ENCODE measurements at regions of chr19 and their contacts with region 1.

Region 1: GRCh38 chr19:18281082-18282020 is at the start of gene JUND:
- DNase-seq: peak; percentile 93
- ATAC-seq: peak; percentile 76
- H3K4me3 ChIP-seq: peak within 1 kb of the TSS; percentile 76 to 89
- H3K27ac ChIP-seq: peak within 1 kb of the TSS; percentile 100
- H3K4me1 ChIP-seq: peaks cover 43 to 56% of the 10 kb centered on the region in 2 experiments
- H3K27me3 ChIP-seq: no peaks in the 10 kb centered on the region
- CTCF ChIP-seq: no peak
- POLR2A ChIP-seq: peak; percentile 98
- RAD21 ChIP-seq: no peak
- total RNA-seq, gene JUND: 221 TPM

Region 2: DNA sequence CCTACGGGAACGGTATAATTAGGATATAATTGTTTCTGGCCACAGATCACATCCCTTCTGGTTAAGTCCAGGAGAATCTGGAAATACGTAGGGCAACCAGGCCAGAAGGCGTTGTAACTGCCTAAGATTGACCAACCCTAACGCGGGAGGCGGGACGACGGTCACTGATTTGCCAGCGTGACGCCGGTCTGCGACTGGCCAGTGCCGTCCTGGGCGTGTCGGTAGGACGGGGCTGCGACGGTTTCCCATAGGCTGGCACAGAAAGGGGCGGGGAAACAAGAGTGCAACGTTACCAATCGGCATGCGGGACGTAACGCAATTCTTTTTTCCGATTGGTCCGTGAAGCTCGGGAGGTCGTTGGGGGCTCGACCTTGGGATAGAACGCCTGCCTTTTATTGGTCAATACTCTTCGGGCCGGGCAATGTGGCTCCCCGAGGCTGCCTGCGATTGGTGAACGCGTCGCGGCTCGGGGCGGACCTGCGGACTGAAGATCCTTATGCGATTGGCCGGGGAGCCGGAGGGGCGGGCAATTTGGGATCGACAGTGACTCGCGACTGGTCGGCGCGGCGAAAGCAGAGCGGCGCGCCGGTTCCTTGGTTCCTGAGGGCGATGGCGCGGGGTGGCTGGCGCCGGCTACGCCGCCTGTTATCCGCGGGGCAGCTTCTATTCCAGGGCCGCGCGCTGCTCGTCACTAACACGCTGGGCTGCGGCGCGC is 88.5 kb before region 1 on chr19 and contains the start of gene MPV17L2:
- CTCF ChIA-PET with region 1: interaction called, 5 read pairs
- POLR2A ChIA-PET with region 1: interaction called, 27 read pairs
- RAD21 ChIA-PET with region 1: no interaction called
- intact Hi-C with region 1: no loop called
- DNase-seq: peak; percentile 100
- ATAC-seq: peak; percentile 88
- H3K4me3 ChIP-seq: peak within 1 kb of the TSS; percentile 90 to 93
- H3K27ac ChIP-seq: peak within 1 kb of the TSS; percentile 77
- H3K4me1 ChIP-seq: peaks cover 14 to 26% of the 10 kb centered on the region in 2 experiments
- H3K27me3 ChIP-seq: no peaks in the 10 kb centered on the region
- CTCF ChIP-seq: no peak
- POLR2A ChIP-seq: peak; percentile 92
- RAD21 ChIP-seq: no peak
- total RNA-seq, gene MPV17L2: 18.7 TPM

Region 3: DNA sequence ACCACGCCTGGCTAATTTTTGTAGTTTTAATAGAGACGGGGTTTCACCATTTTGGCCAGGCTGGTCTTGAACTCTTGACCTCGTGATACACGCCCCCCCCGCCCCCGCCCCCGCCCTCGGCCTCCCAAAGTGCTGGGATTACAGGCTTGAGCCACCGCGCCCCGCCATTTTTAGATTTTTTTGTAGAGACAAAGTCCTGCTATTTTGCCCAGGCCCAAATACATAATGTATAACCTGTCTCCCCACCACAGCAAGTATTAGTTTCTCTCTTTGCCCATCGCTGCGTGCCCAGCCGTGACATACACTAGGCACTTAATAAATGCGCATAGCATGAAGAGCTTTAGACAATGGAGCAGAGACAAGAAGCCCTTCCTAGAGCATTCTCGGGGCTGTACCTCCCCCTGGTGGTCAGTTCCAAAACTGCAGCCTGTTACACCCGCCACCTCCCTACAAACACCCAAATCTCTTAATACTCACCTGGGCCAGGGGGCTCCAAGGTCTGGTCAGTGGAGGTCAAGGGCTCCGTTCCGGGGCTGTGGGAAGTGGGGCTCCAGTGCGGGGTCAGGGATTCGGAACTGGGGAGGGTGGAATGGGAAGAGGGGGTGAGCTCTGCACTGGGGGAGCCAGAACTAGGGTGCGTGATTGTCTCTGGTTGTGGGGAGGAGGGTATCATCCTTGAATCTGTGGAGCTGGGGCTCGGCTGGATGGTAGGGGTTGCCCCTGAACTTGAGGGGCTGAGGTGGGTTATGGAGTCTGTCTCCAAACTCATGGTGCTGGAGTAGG is 29.6 kb before region 1 on chr19:
- CTCF ChIA-PET with region 1: interaction called, 10 read pairs
- POLR2A ChIA-PET with region 1: interaction called, 5 read pairs
- RAD21 ChIA-PET with region 1: no interaction called
- intact Hi-C with region 1: no loop called
- DNase-seq: peak; percentile 74
- ATAC-seq: peak; percentile 84
- H3K4me3 ChIP-seq: no peak overlapping the region
- H3K27ac ChIP-seq: no peak overlapping the region
- H3K4me1 ChIP-seq: peaks cover 0 to 28% of the 10 kb centered on the region in 2 experiments; a peak in 2 of 4 replicates
- H3K27me3 ChIP-seq: no peaks in the 10 kb centered on the region
- CTCF ChIP-seq: peak; percentile 91 to 99 (median 92)
- POLR2A ChIP-seq: no peak
- RAD21 ChIP-seq: peak; percentile 99

Region 4: DNA sequence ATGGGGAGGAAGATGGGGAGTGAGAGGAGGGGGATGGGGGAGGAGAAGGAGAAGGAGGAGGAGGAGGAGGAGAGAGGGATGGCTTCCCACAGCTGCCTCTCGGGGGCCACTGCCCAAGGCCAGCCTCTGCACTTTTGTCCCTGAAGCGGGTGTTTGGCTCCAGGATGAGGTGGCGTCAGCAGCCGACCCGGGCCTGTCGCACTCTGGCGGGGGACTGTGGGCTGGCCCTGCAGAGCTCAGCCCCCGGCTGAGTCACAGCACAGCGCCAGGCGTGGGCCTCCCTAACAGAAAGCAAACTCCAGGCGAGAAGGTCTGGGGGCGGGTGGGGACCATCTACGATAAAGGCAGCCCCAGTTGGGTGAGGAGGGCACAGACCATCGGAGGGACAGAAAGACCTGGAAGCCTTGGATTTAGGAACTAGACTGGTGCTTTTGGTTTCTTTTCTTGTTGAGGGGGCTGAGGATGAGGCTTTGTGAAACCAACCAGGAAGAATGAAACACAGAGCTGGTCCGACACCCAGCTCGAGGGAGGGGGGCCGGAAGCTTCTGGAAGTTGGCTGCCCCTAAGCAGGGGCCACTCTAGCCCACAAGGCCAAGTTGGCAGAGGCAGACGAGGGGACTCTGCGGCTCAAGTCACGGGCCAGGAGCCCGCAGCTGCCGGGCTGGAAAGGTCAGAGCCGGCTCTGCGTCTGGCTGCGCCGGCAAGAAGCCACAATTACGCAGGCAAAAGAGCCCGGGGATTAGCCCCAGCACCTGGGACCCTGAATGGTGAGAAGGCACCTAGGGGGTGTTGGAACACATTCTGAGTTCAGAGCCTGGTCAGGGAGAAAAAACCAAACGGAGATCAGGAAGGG is 23.3 kb after region 1 on chr19:
- CTCF ChIA-PET with region 1: interaction called, 21 read pairs
- POLR2A ChIA-PET with region 1: interaction called, 62 read pairs
- RAD21 ChIA-PET with region 1: interaction called, 4 to 5 read pairs
- intact Hi-C with region 1: no loop called
- DNase-seq: no peak
- ATAC-seq: peak; percentile 76
- H3K4me3 ChIP-seq: peak overlapping the region; percentile 46 to 55
- H3K27ac ChIP-seq: peak overlapping the region; percentile 97
- H3K4me1 ChIP-seq: peaks cover 49 to 63% of the 10 kb centered on the region in 2 experiments
- H3K27me3 ChIP-seq: no peaks in the 10 kb centered on the region
- CTCF ChIP-seq: no peak
- POLR2A ChIP-seq: peak; percentile 55
- RAD21 ChIP-seq: no peak

Region 5: GRCh38 chr19:18340190-18340989 is 59.0 kb after region 1 on chr19 and contains the start of gene PGPEP1:
- CTCF ChIA-PET with region 1: interaction called, 12 read pairs
- POLR2A ChIA-PET with region 1: interaction called, 19 read pairs
- RAD21 ChIA-PET with region 1: interaction called in 1 of 2 experiments, 5 read pairs
- intact Hi-C with region 1: loop called (anchors 5 kb)
- DNase-seq: no peak
- ATAC-seq: peak; percentile 76
- H3K4me3 ChIP-seq: peak within 1 kb of the TSS; percentile 76 to 82
- H3K27ac ChIP-seq: peak within 1 kb of the TSS; percentile 67
- H3K4me1 ChIP-seq: peaks cover 25 to 63% of the 10 kb centered on the region in 2 experiments
- H3K27me3 ChIP-seq: no peaks in the 10 kb centered on the region
- CTCF ChIP-seq: no peak
- POLR2A ChIP-seq: no peak
- RAD21 ChIP-seq: no peak
- total RNA-seq, gene PGPEP1: 30.9 TPM

Region 6: DNA sequence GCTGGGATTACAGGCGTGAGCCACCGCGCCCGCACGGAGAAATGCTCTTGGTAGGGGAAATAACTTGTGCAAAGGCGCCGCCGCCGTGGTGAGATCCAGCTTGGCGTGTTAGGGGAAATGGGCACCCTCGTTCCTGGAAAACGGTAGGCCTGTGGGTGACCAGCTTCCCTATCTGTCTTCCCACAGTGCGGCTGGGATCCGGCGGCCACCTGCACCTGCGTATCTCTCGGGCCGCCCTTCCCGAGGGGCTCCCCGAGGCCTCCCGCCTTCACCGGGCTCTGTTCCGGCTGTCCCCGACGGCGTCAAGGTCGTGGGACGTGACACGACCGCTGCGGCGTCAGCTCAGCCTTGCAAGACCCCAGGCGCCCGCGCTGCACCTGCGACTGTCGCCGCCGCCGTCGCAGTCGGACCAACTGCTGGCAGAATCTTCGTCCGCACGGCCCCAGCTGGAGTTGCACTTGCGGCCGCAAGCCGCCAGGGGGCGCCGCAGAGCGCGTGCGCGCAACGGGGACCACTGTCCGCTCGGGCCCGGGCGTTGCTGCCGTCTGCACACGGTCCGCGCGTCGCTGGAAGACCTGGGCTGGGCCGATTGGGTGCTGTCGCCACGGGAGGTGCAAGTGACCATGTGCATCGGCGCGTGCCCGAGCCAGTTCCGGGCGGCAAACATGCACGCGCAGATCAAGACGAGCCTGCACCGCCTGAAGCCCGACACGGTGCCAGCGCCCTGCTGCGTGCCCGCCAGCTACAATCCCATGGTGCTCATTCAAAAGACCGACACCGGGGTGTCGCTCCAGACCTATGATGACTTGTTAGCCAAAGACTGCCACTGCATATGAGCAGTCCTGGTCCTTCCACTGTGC is 107.0 kb after region 1 on chr19:
- CTCF ChIA-PET with region 1: interaction called, 5 read pairs
- POLR2A ChIA-PET with region 1: interaction called, 25 read pairs
- RAD21 ChIA-PET with region 1: no interaction called
- intact Hi-C with region 1: no loop called
- DNase-seq: no peak
- ATAC-seq: peak; percentile 73
- H3K4me3 ChIP-seq: peak overlapping the region; percentile 71 to 91
- H3K27ac ChIP-seq: peak overlapping the region; percentile 82
- H3K4me1 ChIP-seq: peaks cover 40 to 79% of the 10 kb centered on the region in 2 experiments
- H3K27me3 ChIP-seq: no peaks in the 10 kb centered on the region
- CTCF ChIP-seq: peak; percentile 53 to 98 (median 88); a peak in 5 of 6 replicates
- POLR2A ChIP-seq: no peak
- RAD21 ChIP-seq: peak; percentile 55

Measured in HCT116 (cell line).